ENCODE measurements at regions of chr2 and their contacts with region 1.

Region 1: GRCh38 chr2:17780546-17780945 is 26.6 kb downstream of the GEN1 start:
- DNase-seq: no peak
- ATAC-seq: no peak
- H3K4me3 ChIP-seq: no peak overlapping the region
- H3K27ac ChIP-seq: no peak overlapping the region
- H3K4me1 ChIP-seq: no peaks in the 10 kb centered on the region
- H3K27me3 ChIP-seq: no peaks in the 10 kb centered on the region
- CTCF ChIP-seq: no peak

Region 2: DNA sequence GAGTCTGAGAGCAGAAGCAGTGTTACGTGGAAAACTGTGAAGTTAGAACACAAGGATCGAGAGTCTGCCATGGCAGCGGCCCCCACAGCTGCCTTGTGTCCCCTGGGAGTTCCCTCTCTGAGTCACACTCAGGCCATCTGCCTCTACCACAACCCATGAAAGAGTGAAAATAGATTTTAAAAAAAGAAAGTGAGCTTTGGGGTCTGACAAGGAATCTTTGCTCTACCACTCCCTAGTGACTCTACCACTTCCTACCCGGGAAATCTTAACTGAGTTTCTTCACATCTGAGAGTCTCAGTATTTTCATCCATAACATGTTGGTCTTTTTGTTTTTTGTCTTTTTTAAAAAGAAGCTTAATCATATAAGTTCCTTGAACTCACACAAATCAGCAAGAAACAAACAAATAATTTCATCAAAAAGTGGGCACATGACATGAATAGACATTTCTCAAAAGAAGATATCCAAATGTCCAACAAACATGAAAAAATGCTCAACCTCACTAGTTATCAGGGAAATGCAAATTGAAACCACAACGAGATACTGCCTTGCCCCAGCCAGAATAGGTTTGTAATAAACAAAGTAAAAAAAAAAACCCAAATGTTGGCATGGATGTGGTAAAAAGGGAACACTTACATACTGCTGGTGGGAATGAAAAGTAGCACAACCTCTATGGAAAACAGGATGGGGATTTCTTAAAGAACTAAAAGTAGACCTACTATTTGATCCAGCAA is 33.4 kb after region 1 on chr2:
- intact Hi-C with region 1: loop called in 1 of 2 experiments (anchors 5 kb)
- DNase-seq: peak; percentile 42 to 70
- ATAC-seq: peak; percentile 48 to 78 (median 64)
- H3K4me3 ChIP-seq: no peak overlapping the region
- H3K27ac ChIP-seq: peak overlapping the region; percentile 53
- H3K4me1 ChIP-seq: no peaks in the 10 kb centered on the region
- H3K27me3 ChIP-seq: no peaks in the 10 kb centered on the region
- CTCF ChIP-seq: no peak